ENCODE measurements at regions of chr9 and their contacts with region 1.

Region 1: GRCh38 chr9:101311758-101312420 is 72.9 kb downstream of the BAAT start:
- DNase-seq: peak; percentile 61
- H3K4me3 ChIP-seq: no peak overlapping the region
- H3K27ac ChIP-seq: no peak overlapping the region
- H3K27me3 ChIP-seq: no peaks in the 10 kb centered on the region
- CTCF ChIP-seq: peak; percentile 74

Region 2: DNA sequence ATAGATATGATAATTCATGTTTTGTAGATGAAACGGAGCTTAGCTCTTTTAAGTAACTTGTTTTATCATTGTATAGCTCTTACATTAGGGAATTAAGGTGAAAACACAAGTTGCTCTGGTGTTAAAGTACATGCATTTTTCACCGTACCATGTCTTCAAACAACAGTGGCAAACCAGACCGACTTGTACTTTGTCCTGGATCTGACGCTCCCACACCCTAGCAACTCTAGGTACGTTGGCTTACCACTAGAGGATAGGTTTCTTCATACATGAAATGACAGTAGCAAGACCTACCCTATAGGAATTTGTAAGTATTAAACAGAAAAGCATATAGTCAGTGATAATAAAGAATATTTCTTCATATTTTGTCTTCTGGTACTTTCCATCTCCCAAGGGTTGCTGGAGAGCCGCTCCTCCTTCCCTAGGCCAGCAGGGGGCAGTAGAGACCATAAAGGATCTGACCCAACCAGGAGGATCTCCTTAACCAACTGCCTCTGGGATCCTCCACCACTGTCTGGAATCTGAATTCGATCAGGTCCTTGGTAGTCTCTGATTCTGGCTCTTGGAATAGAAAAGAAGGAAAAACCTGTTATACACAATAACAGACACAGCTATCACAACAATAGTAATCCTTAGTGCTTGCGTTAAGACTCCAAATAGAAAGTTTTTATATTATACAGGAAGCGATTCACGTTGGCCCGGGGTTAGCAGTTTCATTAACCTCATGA is 597.4 kb before region 1 on chr9:
- CTCF ChIA-PET with region 1: interaction called, 42 read pairs
- POLR2A ChIA-PET with region 1: no interaction called
- DNase-seq: peak; percentile 1
- H3K4me3 ChIP-seq: no peak overlapping the region
- H3K27ac ChIP-seq: no peak overlapping the region
- H3K27me3 ChIP-seq: no peaks in the 10 kb centered on the region
- CTCF ChIP-seq: peak; percentile 78

Region 3: DNA sequence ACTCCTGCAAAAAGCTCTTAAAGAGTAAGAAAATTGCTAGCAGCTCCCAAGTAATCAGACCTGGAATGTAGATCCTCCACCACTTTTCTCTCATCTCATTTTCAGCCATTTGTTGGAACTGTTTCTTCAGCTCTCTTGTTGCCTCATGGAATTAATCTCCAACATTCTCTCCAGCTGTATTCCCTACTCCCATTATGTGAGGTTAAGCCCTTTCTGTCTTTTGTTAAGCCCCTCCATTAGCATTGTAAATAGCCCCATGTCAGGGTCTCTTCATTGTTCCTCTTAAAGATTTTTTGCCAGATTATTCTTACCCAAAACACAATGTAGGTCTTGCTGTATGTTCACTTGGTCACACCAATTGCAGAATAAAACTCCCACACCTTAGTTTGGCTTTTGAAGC is 163.5 kb before region 1 on chr9:
- CTCF ChIA-PET with region 1: no interaction called
- POLR2A ChIA-PET with region 1: no interaction called
- DNase-seq: no peak
- H3K4me3 ChIP-seq: no peak overlapping the region
- H3K27ac ChIP-seq: no peak overlapping the region
- H3K27me3 ChIP-seq: no peaks in the 10 kb centered on the region
- CTCF ChIP-seq: no peak

Region 4: GRCh38 chr9:101325053-101325452 is 13.2 kb after region 1 on chr9:
- CTCF ChIA-PET with region 1: interaction called, 12 read pairs
- POLR2A ChIA-PET with region 1: no interaction called
- DNase-seq: no peak
- H3K4me3 ChIP-seq: no peak overlapping the region
- H3K27ac ChIP-seq: no peak overlapping the region
- H3K27me3 ChIP-seq: no peaks in the 10 kb centered on the region
- CTCF ChIP-seq: no peak

Measured in AG04450 (cell line).